ENCODE measurements at regions of chr10 and their contacts with region 1.

Region 1: DNA sequence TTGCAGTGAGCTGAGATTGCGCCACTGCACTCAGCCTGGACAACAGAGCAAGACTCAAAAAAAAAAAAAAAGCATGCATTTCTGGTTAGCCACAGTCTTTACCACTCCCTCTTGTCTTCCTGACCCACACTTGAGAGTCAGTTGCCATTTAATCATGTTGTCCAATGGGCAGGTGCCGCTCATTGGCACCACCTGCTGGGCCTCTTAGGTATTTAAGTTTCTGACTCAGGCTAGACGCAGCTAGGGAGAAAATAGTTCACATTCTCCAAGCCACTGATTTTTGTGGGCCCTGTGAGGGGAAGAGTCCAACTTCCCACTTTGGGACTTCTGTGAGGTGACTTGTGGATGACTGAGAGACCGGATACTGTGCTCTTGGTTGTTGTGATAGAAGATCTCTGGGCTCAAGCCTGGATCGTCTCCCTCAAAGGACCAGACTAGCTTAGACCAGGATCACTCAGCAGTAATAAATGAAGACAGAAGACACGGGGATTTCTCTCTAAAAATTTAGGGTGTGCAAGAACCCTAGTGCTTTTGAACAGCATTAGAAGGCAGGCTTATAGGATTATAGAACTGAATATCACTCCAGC is 26.8 kb upstream of the SORCS3 start:
- DNase-seq: peak; percentile 66
- ATAC-seq: peak; percentile 83
- H3K4me3 Mint-ChIP-seq: no peak overlapping the region
- H3K27ac Mint-ChIP-seq: no peak overlapping the region
- H3K4me1 Mint-ChIP-seq: no peaks in the 10 kb centered on the region
- H3K27me3 Mint-ChIP-seq: 0 out of 2 replicates have a peak, but pooled peaks cover 2% of the 10 kb centered on the region
- CTCF ChIP-seq: peak; percentile 74

Region 2: GRCh38 chr10:104406715-104407650 is 207.4 kb before region 1 on chr10:
- CTCF ChIA-PET with region 1: interaction called, 51 read pairs
- POLR2A ChIA-PET with region 1: no interaction called
- DNase-seq: no peak
- ATAC-seq: peak; percentile 67
- H3K4me3 Mint-ChIP-seq: no peak overlapping the region
- H3K27ac Mint-ChIP-seq: no peak overlapping the region
- H3K4me1 Mint-ChIP-seq: peaks cover 8% of the 10 kb centered on the region
- H3K27me3 Mint-ChIP-seq: no peaks in the 10 kb centered on the region; the same call in 1 of the 2 replicates
- CTCF ChIP-seq: no peak

Region 3: DNA sequence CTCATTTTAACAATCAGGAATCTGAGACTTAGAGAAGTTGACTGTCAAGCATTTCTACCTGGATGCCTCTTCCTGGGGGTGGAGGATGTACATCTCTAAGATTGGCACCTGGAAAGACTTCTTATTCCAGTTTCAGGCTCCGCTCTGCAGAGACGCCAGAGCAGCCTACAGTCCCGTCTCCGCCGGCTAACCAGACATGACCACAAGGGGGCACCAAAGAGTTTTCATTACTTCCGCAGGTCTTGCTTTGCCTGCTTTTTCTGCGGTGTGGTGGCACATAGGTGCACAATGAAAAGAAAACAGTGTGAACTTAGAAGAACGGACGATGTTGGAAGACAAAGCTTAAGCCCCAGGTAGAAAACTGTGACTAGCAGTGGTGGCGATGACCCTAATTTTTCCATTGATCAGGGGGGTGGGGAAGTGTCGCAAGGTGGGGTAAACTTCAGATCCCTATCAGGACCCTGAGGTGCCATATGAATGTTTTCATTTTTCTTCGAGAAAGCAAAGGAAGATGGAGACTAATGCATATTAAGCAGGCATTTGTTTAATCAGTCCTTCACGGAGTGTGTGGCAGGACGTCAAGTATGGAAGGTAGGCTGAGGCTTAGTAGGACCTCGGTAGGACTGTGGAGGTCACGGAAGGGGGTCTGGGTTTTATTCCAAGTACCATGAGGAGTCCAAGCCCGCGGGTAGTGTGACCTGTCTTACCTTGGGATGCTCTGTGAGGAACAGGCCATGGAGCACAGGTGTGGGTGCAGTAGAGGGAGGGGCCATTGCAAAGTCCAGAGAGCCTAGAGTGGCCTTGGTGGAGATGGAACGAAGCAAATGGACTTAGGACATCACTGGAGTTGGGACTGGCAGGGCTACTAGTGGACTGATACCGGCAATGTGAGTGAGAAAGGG is 33.3 kb before region 1 on chr10:
- CTCF ChIA-PET with region 1: interaction called, 21 read pairs
- POLR2A ChIA-PET with region 1: no interaction called
- DNase-seq: peak; percentile 81
- ATAC-seq: peak; percentile 92
- H3K4me3 Mint-ChIP-seq: no peak overlapping the region
- H3K27ac Mint-ChIP-seq: no peak overlapping the region
- H3K4me1 Mint-ChIP-seq: peaks cover 9% of the 10 kb centered on the region
- H3K27me3 Mint-ChIP-seq: no peaks in the 10 kb centered on the region; the same call in 1 of the 2 replicates
- CTCF ChIP-seq: peak; percentile 90

Region 4: GRCh38 chr10:104601166-104601565 is 13.2 kb before region 1 on chr10:
- CTCF ChIA-PET with region 1: interaction called, 11 read pairs
- POLR2A ChIA-PET with region 1: no interaction called
- DNase-seq: no peak
- ATAC-seq: no peak
- H3K4me3 Mint-ChIP-seq: no peak overlapping the region
- H3K27ac Mint-ChIP-seq: no peak overlapping the region
- H3K4me1 Mint-ChIP-seq: peaks cover 4% of the 10 kb centered on the region; the same call in 1 of the 2 replicates
- H3K27me3 Mint-ChIP-seq: no peaks in the 10 kb centered on the region; the same call in 1 of the 2 replicates
- CTCF ChIP-seq: no peak

Measured in WTC11 (cell line).